Naive thymus-derived CD8-positive, alpha-beta T cell (primary cell): ENCODE measurements at regions of chr6 and their contacts with region 1.

Region 1: DNA sequence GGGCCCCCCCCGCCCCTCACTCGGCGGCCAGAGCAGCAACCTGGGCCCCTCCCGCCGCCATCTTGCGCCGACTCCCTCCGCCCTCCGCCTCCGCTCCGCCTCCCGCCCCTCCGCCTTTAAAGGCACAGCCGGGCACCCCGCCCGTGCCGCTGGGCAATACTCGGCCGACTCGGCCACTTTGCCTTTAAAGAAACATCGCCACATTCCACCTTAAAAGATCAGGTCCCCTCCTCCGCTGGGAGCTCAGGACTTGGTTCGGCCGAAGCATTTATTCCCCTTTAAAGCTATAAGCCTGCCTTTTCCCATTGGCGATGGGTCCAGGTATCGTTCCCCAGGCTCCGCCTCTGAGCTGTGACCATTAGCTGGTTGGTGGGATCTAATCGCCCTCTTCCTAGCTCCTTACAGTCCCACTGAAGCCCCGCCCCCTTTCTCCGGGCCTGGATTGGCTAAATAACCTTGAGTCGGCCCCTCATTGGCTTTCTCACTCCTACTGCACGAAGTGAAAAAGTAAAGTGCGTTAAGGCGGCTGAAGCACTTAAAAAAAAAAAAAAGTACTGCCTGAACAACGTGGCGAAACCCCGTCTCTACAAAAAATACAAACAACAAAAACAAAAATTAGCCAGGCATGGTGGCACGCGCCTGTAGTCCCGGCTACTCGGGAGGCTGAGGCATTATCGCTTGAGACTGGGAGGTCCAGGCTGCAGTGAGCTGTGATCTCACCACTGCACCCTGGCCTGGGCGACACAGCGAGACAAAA is at the start of gene ZBTB22:
- DNase-seq: peak; percentile 89 to 98 (median 94)
- ATAC-seq: peak; percentile 59 to 62
- H3K4me3 Mint-ChIP-seq: peak within 1 kb of the TSS in 9 of 10 donors; percentile 96 to 100 (median 99)
- H3K27ac Mint-ChIP-seq: peak within 1 kb of the TSS; percentile 95 to 100 (median 98)
- H3K4me1 Mint-ChIP-seq: peaks cover 36 to 87% (median 79%) of the 10 kb centered on the region in 4 donors
- H3K27me3 Mint-ChIP-seq: no peaks in the 10 kb centered on the region
- polyA plus RNA-seq, gene ZBTB22: 10.4 to 13.4 (median 10.7) TPM

Region 2: DNA sequence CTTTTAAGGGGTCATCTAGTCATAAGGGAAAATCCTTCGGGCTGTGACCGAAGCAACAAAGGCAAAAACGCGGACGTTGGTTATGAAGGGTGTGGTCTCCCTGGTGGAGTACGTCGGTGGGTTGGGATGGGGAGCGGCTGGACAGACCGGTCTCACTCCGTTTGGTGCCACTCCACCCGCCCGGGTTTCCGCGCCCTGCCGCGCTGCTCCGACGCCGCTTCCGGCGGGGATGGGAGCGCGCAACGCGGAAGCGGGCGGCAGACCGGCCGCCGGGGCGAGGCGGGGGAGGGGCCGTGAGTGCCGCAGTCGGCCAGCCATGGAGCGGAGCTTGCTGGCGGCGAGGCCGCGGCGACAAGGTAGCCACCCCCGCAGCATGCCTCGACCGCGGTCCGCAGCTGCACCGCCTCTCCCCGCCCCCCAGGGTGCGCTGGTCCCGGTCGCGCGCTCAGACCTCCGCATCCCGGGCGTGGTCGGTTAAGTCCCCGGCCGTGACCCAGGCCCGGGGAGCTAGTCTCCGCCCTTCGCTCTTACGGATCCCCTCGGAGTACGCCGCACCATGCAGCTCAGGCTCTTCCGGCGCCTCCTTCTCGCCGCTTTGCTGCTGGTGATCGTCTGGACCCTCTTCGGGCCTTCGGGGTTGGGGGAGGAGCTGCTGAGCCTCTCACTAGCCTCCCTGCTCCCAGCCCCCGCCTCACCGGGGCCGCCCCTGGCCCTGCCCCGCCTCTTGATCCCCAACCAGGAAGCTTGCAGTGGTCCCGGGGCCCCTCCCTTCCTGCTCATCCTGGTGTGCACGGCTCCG is 40.8 kb before region 1 on chr6 and contains the start of gene B3GALT4:
- POLR2A ChIA-PET with region 1: interaction called, 30 read pairs
- DNase-seq: peak; percentile 37 to 78 (median 64)
- ATAC-seq: peak; percentile 72 to 76
- H3K4me3 Mint-ChIP-seq: peak within 1 kb of the TSS; percentile 88 to 96 (median 92)
- H3K27ac Mint-ChIP-seq: peak within 1 kb of the TSS; percentile 72 to 97 (median 94)
- H3K4me1 Mint-ChIP-seq: peaks cover 34 to 80% (median 77%) of the 10 kb centered on the region in 4 donors
- H3K27me3 Mint-ChIP-seq: no peaks in the 10 kb centered on the region
- polyA plus RNA-seq, gene B3GALT4: 14.5 to 20.4 (median 18.7) TPM

Region 3: DNA sequence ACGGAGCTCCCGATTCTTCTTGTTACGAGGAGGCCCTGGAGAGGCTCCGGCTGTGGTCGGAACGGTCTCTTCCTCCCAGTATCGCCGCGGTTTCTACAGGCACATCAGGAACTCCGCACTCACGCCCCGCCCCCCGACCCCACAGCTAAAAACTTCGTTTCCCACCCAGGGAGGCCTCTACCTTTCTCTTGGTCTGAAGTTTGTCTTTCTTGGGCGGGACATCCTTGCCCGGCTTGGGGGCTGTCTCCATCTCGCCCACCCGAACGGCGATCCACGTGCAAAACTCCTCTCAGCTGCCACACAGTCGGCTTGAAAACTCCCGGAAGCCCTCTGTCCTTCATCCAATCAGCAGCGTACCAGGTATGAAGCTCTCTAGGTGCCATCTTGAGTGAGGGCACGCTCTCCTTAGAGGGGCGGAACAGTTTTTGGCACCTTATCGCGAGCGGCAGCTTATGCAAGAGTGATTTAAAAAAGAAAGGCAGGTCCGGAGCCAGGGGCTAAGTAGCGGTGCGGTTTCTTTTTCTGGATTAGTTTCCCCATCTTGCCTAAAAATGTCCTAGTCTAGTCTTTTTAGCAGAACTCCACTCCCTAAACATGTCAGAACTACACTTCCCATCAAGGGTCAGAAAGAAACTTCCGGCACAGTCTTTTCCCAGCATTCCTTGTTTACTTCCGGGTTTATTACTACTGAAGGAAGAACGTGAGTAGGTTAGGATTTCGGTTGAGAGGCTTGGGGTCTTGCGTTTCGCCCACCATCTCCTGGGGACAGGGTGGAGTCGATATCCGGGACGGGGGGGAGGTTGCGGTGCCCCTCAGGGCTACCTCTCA is 28.7 kb before region 1 on chr6 and contains the starts of genes PFDN6 and WDR46:
- POLR2A ChIA-PET with region 1: interaction called, 36 read pairs
- DNase-seq: peak; percentile 53 to 91 (median 81)
- ATAC-seq: peak; percentile 96 to 97
- H3K4me3 Mint-ChIP-seq: peak within 1 kb of the TSS; percentile 87 to 100 (median 99)
- H3K27ac Mint-ChIP-seq: peak within 1 kb of the TSS; percentile 84 to 97 (median 94)
- H3K4me1 Mint-ChIP-seq: peaks cover 22 to 51% (median 48%) of the 10 kb centered on the region in 4 donors
- H3K27me3 Mint-ChIP-seq: no peaks in the 10 kb centered on the region
- polyA plus RNA-seq, gene PFDN6: 33.4 to 38.2 (median 35.5) TPM
- polyA plus RNA-seq, gene WDR46: 71.3 to 83.7 (median 74.1) TPM

Region 4: GRCh38 chr6:33299237-33299944 is 18.5 kb before region 1 on chr6:
- POLR2A ChIA-PET with region 1: interaction called, 89 read pairs
- DNase-seq: peak; percentile 86 to 95 (median 92)
- ATAC-seq: peak; percentile 82 to 88
- H3K4me3 Mint-ChIP-seq: peak overlapping the region; percentile 94 to 100 (median 98)
- H3K27ac Mint-ChIP-seq: peak overlapping the region; percentile 94 to 100 (median 99)
- H3K4me1 Mint-ChIP-seq: peaks cover 20 to 49% (median 43%) of the 10 kb centered on the region in 4 donors
- H3K27me3 Mint-ChIP-seq: peaks cover 0 to 2% (median 0%) of the 10 kb centered on the region in 5 donors

Region 5: GRCh38 chr6:33417903-33418689 is 100.2 kb after region 1 on chr6 and contains the start of gene CUTA:
- POLR2A ChIA-PET with region 1: interaction called, 12 read pairs
- DNase-seq: peak; percentile 93 to 100 (median 99)
- ATAC-seq: peak; percentile 90
- H3K4me3 Mint-ChIP-seq: peak within 1 kb of the TSS; percentile 90 to 95 (median 92)
- H3K27ac Mint-ChIP-seq: peak within 1 kb of the TSS; percentile 98 to 100 (median 99)
- H3K4me1 Mint-ChIP-seq: peaks cover 49 to 94% (median 80%) of the 10 kb centered on the region in 4 donors
- H3K27me3 Mint-ChIP-seq: no peaks in the 10 kb centered on the region
- polyA plus RNA-seq, gene CUTA: 338 to 441 (median 385) TPM